Endothelial cell of umbilical vein (primary cell): ENCODE measurements at regions of chr5 and their contacts with region 1.

Region 1: DNA sequence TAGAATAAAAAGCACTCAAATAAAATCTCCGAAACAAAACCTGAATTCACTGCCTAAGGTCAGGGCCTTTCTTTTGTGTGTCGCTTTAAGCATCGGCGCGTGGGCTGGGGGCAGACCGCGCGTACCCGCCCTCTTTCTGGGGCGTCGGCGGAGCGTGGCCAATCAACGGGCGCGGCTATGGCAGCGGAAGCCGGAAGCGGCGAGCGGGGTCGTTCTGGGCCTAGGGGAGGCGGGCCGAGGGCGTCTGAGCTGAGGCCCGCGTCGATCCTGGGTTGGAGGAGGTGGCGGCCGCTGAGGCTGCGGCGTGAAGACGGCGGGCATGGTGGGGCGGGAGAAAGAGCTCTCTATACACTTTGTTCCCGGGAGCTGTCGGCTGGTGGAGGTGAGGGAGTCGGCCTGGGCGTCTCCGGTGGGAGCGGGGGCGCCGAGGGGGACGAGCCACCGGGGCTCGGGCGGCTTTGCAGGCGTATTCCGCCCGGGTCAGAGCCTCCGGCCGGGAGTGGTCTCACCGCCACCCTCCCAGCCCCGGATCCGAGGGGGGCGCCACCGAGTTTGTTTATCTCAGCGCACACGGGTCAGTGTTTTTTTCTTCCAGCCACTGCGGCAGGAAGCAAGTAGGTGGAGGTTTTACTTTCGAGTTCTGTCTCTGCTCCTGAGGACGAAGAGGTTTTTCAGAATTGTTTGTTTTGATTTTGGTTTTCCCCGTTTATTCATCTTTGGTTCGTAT is at the start of gene MAT2B:
- DNase-seq: peak; percentile 97
- H3K4me3 ChIP-seq: peak within 1 kb of the TSS; percentile 59 to 98 (median 72)
- H3K27ac ChIP-seq: peak within 1 kb of the TSS; percentile 70
- H3K4me1 ChIP-seq: peaks cover 37% of the 10 kb centered on the region
- H3K27me3 ChIP-seq: no peaks in the 10 kb centered on the region
- CTCF ChIP-seq: peak; percentile 52 to 68
- POLR2A ChIP-seq: peak; percentile 93
- total RNA-seq, gene MAT2B: 93.1 and 101 TPM in 2 replicates

Region 2: GRCh38 chr5:163437309-163438182 is 68.0 kb before region 1 on chr5 and contains the start of gene CCNG1:
- CTCF ChIA-PET with region 1: interaction called, 4 read pairs
- POLR2A ChIA-PET with region 1: interaction called, 4 read pairs
- dilution Hi-C with region 1: no loop called
- intact Hi-C with region 1: loop called (anchors 1 kb)
- DNase-seq: peak; percentile 97
- H3K4me3 ChIP-seq: peak within 1 kb of the TSS; percentile 90 to 99 (median 92)
- H3K27ac ChIP-seq: peak within 1 kb of the TSS; percentile 77
- H3K4me1 ChIP-seq: peaks cover 19% of the 10 kb centered on the region
- H3K27me3 ChIP-seq: peaks cover 0 to 4% of the 10 kb centered on the region in 2 experiments
- CTCF ChIP-seq: no peak
- POLR2A ChIP-seq: peak; percentile 96
- total RNA-seq, gene CCNG1: 164 and 186 TPM in 2 replicates

Region 3: DNA sequence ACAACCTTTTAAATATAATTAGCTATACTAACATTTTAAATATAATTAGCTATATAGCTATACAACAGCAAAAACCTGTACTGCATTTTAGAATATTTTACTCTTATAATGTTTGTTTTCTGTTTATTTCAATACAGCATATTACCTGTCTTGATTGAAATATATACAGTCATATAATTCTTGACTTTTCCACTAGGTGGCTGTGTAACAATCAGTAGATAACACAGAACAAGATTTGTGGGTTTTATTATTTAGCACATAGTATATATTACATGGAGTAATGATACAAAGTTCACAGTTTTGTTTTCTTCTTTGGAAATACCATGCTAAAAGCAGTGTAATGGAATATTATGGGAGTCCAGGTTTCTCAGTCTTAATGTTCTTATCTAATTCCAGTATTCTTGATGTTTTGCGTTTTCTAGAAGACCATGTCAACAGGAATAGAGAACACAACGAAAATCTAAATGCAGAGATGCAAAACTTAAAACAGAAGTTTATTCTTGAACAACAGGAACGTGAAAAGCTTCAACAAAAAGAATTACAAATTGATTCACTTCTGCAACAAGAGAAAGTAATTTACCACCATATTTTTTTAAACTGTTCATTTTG is 31.8 kb before region 1 on chr5:
- CTCF ChIA-PET with region 1: interaction called, 5 read pairs
- POLR2A ChIA-PET with region 1: no interaction called
- dilution Hi-C with region 1: no loop called
- intact Hi-C with region 1: loop called (anchors 1 kb)
- DNase-seq: peak; percentile 18
- H3K4me3 ChIP-seq: no peak overlapping the region
- H3K27ac ChIP-seq: no peak overlapping the region
- H3K4me1 ChIP-seq: peaks cover 7% of the 10 kb centered on the region
- H3K27me3 ChIP-seq: no peaks in the 10 kb centered on the region
- CTCF ChIP-seq: no peak
- POLR2A ChIP-seq: no peak

Region 4: DNA sequence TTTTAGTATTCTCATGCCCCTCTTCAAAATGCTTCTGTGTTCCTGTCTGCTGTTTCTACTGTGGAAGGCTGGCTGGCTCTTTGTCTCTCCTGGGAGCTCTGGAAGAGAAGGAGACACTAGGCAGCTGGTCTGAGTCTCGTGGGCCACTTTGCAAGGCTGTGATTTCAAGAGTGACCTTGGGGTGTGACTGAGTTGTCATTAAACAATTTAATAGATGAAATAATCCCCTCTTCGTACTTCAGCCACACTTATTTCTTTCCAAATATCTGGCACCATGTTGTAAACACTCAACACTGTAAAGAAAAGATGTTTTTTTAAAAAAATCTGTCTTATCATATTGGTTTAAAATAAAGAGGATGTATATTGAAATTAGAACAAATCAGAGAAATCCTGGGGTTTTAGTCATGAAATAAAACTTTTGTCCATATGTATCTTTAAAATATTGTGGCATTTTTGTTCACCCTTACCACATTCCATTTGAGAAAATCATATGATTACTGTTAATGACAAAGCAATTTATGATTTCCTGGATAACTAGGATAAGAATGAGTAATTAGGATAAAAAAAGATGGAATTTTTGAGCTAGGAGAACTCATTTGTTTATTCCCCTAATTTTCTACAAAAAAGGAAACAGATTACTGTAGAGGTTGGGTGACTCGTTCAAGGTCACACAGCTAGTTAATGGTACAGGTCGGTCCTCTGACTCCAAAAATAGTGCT is 200.7 kb after region 1 on chr5:
- CTCF ChIA-PET with region 1: no interaction called
- POLR2A ChIA-PET with region 1: no interaction called
- dilution Hi-C with region 1: no loop called
- intact Hi-C with region 1: loop called (anchors 1 kb)
- DNase-seq: peak; percentile 83
- H3K4me3 ChIP-seq: no peak overlapping the region
- H3K27ac ChIP-seq: peak overlapping the region; percentile 96
- H3K4me1 ChIP-seq: peaks cover 34% of the 10 kb centered on the region
- H3K27me3 ChIP-seq: no peaks in the 10 kb centered on the region
- CTCF ChIP-seq: no peak
- POLR2A ChIP-seq: no peak

Region 5: DNA sequence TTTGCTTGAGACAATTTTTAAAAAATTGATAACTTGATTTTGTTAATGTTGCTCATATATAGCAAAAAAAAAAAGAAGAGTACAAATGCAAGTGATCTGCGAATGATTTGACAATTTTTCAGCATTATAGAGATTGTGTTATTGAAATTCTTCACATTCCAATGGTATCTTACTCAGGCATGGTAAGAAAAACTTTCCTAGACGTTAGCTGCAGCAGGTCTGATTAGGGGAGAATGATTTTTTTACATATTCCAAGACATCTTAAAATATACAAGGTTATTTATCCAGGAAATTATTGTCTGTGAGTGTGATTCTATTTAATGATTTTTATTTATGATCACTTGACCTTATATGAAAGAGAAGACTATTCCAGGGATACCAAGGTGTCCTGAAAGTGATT is 361.8 kb after region 1 on chr5:
- CTCF ChIA-PET with region 1: no interaction called
- POLR2A ChIA-PET with region 1: no interaction called
- dilution Hi-C with region 1: no loop called
- intact Hi-C with region 1: loop called (anchors 2 kb)
- DNase-seq: peak; percentile 76
- H3K4me3 ChIP-seq: no peak overlapping the region
- H3K27ac ChIP-seq: peak overlapping the region; percentile 99
- H3K4me1 ChIP-seq: peaks cover 55% of the 10 kb centered on the region
- H3K27me3 ChIP-seq: no peaks in the 10 kb centered on the region
- CTCF ChIP-seq: no peak
- POLR2A ChIP-seq: peak; percentile 26